ENCODE measurements at regions of chr18 and their contacts with region 1.

Region 1: GRCh38 chr18:5879479-5879882 is 15.8 kb downstream of the TMEM200C start:
- DNase-seq: no peak
- ATAC-seq: peak; percentile 46 to 76 (median 70)
- H3K4me3 ChIP-seq: no peak overlapping the region
- H3K27ac ChIP-seq: no peak overlapping the region
- H3K4me1 ChIP-seq: no peaks in the 10 kb centered on the region
- H3K27me3 ChIP-seq: peaks cover 0 to 10% (median 0%) of the 10 kb centered on the region in 4 donors
- CTCF ChIP-seq: peak; percentile 35 to 68 (median 64)

Region 2: DNA sequence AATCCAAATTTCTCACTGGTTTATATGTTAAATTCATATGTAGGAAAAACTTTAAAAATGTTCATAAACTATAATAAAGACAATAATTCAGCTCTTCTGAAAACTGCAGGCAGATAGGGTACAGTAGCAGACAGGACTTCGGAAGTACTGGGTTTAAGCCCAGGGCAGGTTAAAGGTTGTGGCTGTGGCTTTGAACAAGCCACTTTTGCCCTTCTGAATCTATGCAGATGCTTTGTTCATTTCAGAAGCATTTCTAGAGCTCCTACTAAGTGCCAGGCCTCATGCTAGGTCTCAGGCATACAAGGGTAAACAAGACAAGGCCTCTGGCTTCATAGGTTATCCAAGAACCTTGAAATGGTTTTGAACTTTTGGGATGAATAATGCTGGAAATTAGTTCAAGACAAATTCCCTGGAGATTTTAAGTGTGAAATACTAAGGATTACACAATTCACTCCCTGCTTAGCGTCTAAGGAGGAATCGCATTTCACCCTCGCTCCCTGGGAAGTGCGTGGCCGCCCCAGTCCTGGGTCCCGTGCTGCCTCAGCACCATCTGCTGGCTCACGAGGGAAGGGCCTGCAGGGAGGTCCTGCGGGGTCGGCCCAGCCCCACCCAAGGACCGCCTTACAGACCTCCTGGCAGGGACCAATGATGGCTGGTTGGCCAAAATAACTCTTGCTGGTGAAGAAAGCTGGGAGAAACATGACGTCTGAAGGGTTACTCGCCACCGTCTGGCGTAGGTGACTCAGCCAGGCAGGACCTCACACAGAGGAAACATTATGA is 602.9 kb after region 1 on chr18:
- intact Hi-C with region 1: loop called in 1 of 3 experiments (anchors 10 kb)
- DNase-seq: peak; percentile 24 to 78 (median 47)
- ATAC-seq: peak; percentile 79 to 93 (median 90)
- H3K4me3 ChIP-seq: no peak overlapping the region
- H3K27ac ChIP-seq: peak overlapping the region in 3 of 4 donors; percentile 20 to 41 (median 31)
- H3K4me1 ChIP-seq: no peaks in the 10 kb centered on the region
- H3K27me3 ChIP-seq: no peaks in the 10 kb centered on the region
- CTCF ChIP-seq: peak in 3 of 4 donors; percentile 49 to 57 (median 51)

Region 3: DNA sequence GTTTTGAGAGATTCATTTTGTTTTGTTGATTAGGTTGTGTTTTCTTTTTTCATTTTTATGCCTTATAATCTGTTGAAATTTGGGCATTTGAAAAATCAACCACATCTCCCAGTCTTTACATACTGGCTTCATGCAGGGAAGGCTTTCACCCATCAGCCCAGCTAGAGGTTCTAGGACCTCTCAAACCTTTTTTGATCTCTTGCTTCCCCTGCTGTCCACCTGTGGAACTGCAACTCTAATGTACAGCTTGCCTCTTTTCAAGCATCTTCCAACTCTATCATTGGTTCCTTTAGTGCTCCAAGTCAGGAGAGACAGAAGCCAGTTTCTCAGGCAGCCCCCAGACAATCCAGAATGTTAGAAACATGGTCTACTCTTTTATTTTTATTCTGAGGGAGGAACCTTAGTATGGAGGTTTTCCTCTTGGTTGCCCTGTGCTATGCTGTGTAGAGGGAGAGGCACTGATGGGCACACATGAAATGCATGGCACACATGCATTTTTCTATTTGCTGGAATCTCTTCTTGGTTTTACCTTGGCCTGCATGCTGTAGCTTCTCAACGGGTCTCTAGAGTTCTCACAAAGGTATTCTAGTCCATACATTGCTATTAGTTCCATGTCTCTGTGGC is 642.4 kb after region 1 on chr18:
- intact Hi-C with region 1: loop called in 1 of 3 experiments (anchors 10 kb)
- DNase-seq: peak in 1 of 6 donors; percentile 36
- ATAC-seq: peak in 3 of 4 donors; percentile 35 to 75 (median 40)
- H3K4me3 ChIP-seq: no peak overlapping the region
- H3K27ac ChIP-seq: no peak overlapping the region
- H3K4me1 ChIP-seq: no peaks in the 10 kb centered on the region
- H3K27me3 ChIP-seq: no peaks in the 10 kb centered on the region
- CTCF ChIP-seq: peak; percentile 15 to 57 (median 34)

Region 4: GRCh38 chr18:6885992-6886796 is 1006.7 kb after region 1 on chr18:
- intact Hi-C with region 1: loop called in 2 of 3 experiments (anchors 10 kb)
- DNase-seq: peak in 3 of 6 donors; percentile 18 to 54 (median 36)
- ATAC-seq: peak; percentile 56 to 94 (median 88)
- H3K4me3 ChIP-seq: no peak overlapping the region
- H3K27ac ChIP-seq: no peak overlapping the region
- H3K4me1 ChIP-seq: no peaks in the 10 kb centered on the region
- H3K27me3 ChIP-seq: no peaks in the 10 kb centered on the region
- CTCF ChIP-seq: peak; percentile 27 to 57 (median 40)

Region 5: GRCh38 chr18:6891788-6892187 is 1012.3 kb after region 1 on chr18:
- intact Hi-C with region 1: loop called in 2 of 3 experiments (anchors 10 kb)
- DNase-seq: no peak
- ATAC-seq: no peak
- H3K4me3 ChIP-seq: no peak overlapping the region
- H3K27ac ChIP-seq: no peak overlapping the region
- H3K4me1 ChIP-seq: no peaks in the 10 kb centered on the region
- H3K27me3 ChIP-seq: no peaks in the 10 kb centered on the region
- CTCF ChIP-seq: no peak